GM12878 (cell line): ENCODE measurements at regions of chr5 and their contacts with region 1.

Region 1: GRCh38 chr5:68070591-68071281 is 144.8 kb upstream of the PIK3R1 start:
- DNase-seq: peak; percentile 84
- ATAC-seq: peak; percentile 99
- H3K4me3 ChIP-seq: no peak overlapping the region
- H3K27ac ChIP-seq: peak overlapping the region; percentile 62; the same call in 1 of the 2 replicates
- H3K4me1 ChIP-seq: peaks cover 14% of the 10 kb centered on the region
- H3K27me3 ChIP-seq: no peaks in the 10 kb centered on the region
- CTCF ChIP-seq: no peak
- EP300 ChIP-seq: peak; percentile 29 to 74; a peak in 2 of 4 replicates
- POLR2A ChIP-seq: no peak
- RAD21 ChIP-seq: no peak

Region 2: DNA sequence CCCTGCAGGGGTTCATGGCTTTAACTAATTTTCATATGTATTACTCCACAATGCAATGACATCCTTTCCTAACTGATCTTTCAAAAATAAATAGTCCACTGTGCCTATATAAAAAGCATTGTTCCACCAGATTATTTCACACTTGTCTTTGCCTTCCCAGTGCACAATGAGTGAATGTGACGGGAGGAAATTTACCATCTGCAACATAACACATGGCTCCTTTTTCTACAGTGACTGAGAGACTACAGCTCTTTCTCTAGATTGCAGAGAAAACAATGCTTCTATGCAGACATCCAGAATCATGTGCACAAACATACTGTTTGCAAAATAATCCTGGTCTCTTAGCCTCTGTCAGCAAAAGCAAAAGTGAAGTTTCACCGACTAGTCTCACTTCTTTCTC is 338.9 kb before region 1 on chr5:
- CTCF ChIA-PET with region 1: no interaction called
- POLR2A ChIA-PET with region 1: no interaction called
- RAD21 ChIA-PET with region 1: no interaction called
- SMC1A ChIA-PET with region 1: no interaction called
- in situ Hi-C with region 1: no loop called
- intact Hi-C with region 1: no loop called
- DNase-seq: no peak
- ATAC-seq: no peak
- H3K4me3 ChIP-seq: no peak overlapping the region
- H3K27ac ChIP-seq: no peak overlapping the region
- H3K4me1 ChIP-seq: no peaks in the 10 kb centered on the region
- H3K27me3 ChIP-seq: no peaks in the 10 kb centered on the region
- CTCF ChIP-seq: no peak
- EP300 ChIP-seq: no peak
- POLR2A ChIP-seq: no peak
- RAD21 ChIP-seq: no peak

Region 3: DNA sequence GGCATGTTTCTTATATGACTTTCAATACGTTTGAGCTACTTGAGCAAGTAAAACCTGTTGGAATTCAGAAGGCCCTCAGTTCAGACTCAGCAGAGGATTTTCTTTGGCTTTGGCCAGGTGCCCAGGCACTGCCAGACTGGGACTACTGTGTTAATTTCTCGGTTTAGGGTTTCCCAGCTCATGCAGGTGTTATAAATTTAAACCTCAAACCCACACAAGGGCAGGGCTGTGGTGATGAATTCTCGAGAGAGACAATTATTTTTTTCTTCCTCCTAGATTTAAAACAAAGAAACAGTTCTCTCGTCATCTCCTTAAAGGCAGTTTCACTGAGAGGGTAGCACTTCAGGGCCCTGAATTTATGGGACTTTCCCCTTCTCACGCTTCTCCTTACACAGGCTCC is 261.1 kb before region 1 on chr5:
- CTCF ChIA-PET with region 1: no interaction called
- POLR2A ChIA-PET with region 1: no interaction called
- RAD21 ChIA-PET with region 1: no interaction called
- SMC1A ChIA-PET with region 1: no interaction called
- in situ Hi-C with region 1: no loop called
- intact Hi-C with region 1: loop called (anchors 1 kb)
- DNase-seq: peak; percentile 83
- ATAC-seq: peak; percentile 82
- H3K4me3 ChIP-seq: no peak overlapping the region
- H3K27ac ChIP-seq: no peak overlapping the region
- H3K4me1 ChIP-seq: peaks cover 17% of the 10 kb centered on the region
- H3K27me3 ChIP-seq: no peaks in the 10 kb centered on the region
- CTCF ChIP-seq: no peak
- EP300 ChIP-seq: peak; percentile 68 to 73; a peak in 2 of 4 replicates
- POLR2A ChIP-seq: no peak
- RAD21 ChIP-seq: no peak

Region 4: DNA sequence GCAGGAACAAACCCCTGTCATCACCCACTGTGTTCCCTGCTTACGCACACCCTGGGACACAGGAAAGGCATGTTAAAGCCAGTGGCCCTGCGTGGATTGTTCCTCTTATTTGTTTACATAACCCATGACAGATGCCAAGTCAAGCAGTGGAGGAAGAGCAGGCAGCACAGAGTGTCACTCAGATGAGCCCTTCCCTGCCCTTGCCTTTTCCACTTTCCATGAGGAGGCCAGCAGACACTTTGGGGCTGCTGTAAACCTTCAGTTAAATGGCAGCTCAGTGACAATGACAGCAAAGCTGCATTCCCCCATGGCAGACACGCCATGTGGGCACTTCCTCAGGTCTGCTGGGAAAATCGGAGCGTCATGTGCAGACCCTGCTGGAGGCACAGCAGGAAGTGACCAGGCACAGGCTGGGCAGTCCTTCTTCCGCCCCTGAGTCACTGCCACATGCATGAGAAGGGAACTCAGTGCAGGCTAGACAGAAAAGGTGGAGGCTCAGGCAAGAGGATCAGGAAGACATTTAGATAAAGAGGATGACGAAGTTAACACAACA is 72.0 kb before region 1 on chr5:
- CTCF ChIA-PET with region 1: no interaction called
- POLR2A ChIA-PET with region 1: no interaction called
- RAD21 ChIA-PET with region 1: no interaction called
- SMC1A ChIA-PET with region 1: no interaction called
- in situ Hi-C with region 1: no loop called
- intact Hi-C with region 1: no loop called
- DNase-seq: no peak
- ATAC-seq: no peak
- H3K4me3 ChIP-seq: no peak overlapping the region
- H3K27ac ChIP-seq: no peak overlapping the region
- H3K4me1 ChIP-seq: no peaks in the 10 kb centered on the region
- H3K27me3 ChIP-seq: no peaks in the 10 kb centered on the region
- CTCF ChIP-seq: no peak
- EP300 ChIP-seq: no peak
- POLR2A ChIP-seq: no peak
- RAD21 ChIP-seq: no peak

Region 5: DNA sequence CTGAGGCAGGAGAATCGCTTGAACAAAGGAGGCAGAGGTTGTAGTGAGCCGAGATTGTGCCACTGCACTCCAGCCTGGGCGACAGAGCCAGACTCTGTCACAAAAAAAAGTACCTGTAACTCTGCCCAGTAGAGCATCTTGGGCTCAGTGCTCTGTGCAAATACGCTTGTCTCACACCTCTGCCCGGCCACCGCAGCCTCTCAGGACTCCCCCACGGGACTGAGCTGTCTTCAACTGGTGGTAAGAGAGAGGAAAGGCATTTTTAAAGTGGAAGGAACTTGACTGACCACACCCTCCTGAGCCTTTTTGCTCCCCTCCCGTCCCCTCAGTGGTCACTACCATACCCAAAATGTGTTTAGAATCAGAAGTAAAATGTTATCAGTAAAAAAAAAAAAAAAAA is 29.4 kb before region 1 on chr5:
- CTCF ChIA-PET with region 1: no interaction called
- POLR2A ChIA-PET with region 1: interaction called, 4 read pairs
- RAD21 ChIA-PET with region 1: no interaction called
- SMC1A ChIA-PET with region 1: no interaction called
- in situ Hi-C with region 1: no loop called
- intact Hi-C with region 1: loop called (anchors 2 kb)
- DNase-seq: peak; percentile 56
- ATAC-seq: peak; percentile 98
- H3K4me3 ChIP-seq: no peak overlapping the region
- H3K27ac ChIP-seq: no peak overlapping the region
- H3K4me1 ChIP-seq: peaks cover 19% of the 10 kb centered on the region
- H3K27me3 ChIP-seq: no peaks in the 10 kb centered on the region
- CTCF ChIP-seq: no peak
- EP300 ChIP-seq: peak in 1 of 2 experiments; percentile 24; a peak in 1 of 4 replicates
- POLR2A ChIP-seq: no peak
- RAD21 ChIP-seq: no peak

Region 6: DNA sequence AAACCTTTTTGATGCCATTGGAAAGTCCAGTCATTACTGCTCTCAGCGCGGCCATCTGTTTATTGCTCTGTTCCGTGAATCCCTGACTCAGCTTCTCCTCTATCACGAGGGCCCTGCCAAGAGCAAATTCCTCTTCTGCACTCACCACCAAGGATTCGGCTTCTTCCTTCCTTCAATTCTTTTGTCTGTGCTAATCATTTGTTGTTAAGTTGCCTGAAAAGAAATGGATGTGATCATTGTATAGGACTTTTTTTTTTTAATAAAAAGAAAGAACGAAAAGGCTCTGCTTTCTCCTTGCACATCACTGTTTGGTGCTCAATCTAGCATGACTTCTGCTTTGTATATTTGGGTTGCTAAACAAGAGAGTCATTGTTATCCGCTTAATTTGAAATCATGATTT is 16.1 kb after region 1 on chr5:
- CTCF ChIA-PET with region 1: no interaction called
- POLR2A ChIA-PET with region 1: no interaction called
- RAD21 ChIA-PET with region 1: no interaction called
- SMC1A ChIA-PET with region 1: no interaction called
- in situ Hi-C with region 1: no loop called
- intact Hi-C with region 1: no loop called
- DNase-seq: no peak
- ATAC-seq: no peak
- H3K4me3 ChIP-seq: no peak overlapping the region
- H3K27ac ChIP-seq: no peak overlapping the region
- H3K4me1 ChIP-seq: no peaks in the 10 kb centered on the region
- H3K27me3 ChIP-seq: no peaks in the 10 kb centered on the region
- CTCF ChIP-seq: no peak
- EP300 ChIP-seq: no peak
- POLR2A ChIP-seq: no peak
- RAD21 ChIP-seq: no peak

Region 7: DNA sequence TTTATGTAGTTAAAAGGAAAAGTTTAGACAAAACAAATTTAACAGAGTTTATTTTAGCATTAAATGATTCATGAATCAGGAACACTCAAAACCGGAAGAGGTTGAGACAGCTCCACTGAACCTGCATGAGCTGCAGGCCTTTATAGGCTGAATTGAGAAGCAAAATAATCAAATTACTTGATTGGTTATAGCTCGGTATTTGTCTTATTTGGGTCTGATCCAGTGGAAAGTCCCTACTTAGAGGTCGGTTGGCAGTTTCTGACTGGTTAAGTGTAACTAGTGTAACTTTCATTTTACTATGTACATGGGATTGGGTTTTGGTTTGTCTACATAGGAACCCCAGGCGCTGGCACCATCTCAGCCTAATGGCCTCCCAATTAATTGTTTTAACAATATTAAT is 70.8 kb after region 1 on chr5:
- CTCF ChIA-PET with region 1: no interaction called
- POLR2A ChIA-PET with region 1: no interaction called
- RAD21 ChIA-PET with region 1: no interaction called
- SMC1A ChIA-PET with region 1: no interaction called
- in situ Hi-C with region 1: no loop called
- intact Hi-C with region 1: loop called (anchors 2 kb)
- DNase-seq: peak; percentile 55
- ATAC-seq: peak; percentile 83
- H3K4me3 ChIP-seq: no peak overlapping the region
- H3K27ac ChIP-seq: peak overlapping the region; percentile 78
- H3K4me1 ChIP-seq: peaks cover 41% of the 10 kb centered on the region
- H3K27me3 ChIP-seq: no peaks in the 10 kb centered on the region
- CTCF ChIP-seq: no peak
- EP300 ChIP-seq: no peak
- POLR2A ChIP-seq: no peak
- RAD21 ChIP-seq: no peak

Region 8: GRCh38 chr5:68239487-68239886 is 168.8 kb after region 1 on chr5:
- CTCF ChIA-PET with region 1: no interaction called
- POLR2A ChIA-PET with region 1: no interaction called
- RAD21 ChIA-PET with region 1: no interaction called
- SMC1A ChIA-PET with region 1: no interaction called
- in situ Hi-C with region 1: no loop called
- intact Hi-C with region 1: loop called (anchors 5 kb)
- DNase-seq: no peak
- ATAC-seq: peak; percentile 94
- H3K4me3 ChIP-seq: no peak overlapping the region
- H3K27ac ChIP-seq: no peak overlapping the region; the same call in 1 of the 2 replicates
- H3K4me1 ChIP-seq: peaks cover 19% of the 10 kb centered on the region; the same call in 1 of the 2 replicates
- H3K27me3 ChIP-seq: no peaks in the 10 kb centered on the region
- CTCF ChIP-seq: no peak
- EP300 ChIP-seq: peak in 1 of 2 experiments; percentile 42; a peak in 1 of 4 replicates
- POLR2A ChIP-seq: no peak
- RAD21 ChIP-seq: no peak